Naive thymus-derived CD4-positive, alpha-beta T cell (primary cell): ENCODE measurements at regions of chr20 and their contacts with region 1.

Region 1: DNA sequence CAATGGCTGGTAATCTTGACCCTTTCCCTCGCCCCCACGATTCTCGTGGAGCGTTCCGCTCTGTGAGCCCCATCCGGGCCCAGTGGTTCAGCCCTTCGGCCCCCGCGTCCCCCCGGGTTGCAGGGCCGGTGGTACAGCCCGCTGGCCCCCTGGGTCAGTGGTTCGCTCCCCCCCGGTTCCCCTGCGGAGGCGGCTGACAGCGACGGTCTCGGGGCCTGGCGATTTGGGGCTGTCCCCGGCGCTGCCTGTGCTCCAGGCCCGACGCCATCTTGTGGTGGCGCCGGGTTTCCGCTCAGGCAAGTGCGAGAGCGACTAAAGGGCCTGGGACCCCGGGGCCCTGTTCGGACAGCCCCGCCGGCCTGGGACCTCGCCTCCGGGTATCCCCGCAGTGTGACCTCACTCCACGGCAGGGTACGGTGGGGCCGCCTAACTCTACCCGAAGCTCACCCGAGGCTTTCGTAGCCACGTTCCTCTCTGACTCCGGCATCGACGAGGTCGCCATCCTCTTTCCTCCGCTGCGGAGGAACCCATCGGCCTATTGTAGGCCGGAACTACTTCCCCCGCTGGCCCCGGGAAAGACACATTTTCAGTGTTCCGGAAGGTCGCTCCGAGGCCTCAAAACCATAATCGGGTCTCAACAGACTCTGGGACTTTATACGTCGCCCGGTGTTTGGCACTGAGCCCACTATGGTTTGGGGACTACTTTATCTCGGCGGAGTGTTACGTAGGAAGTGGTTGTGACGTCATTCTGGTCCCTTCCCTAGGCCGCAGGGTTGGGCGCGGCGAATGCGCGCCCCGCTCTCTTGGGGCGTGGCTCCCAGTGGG is at the start of gene ZNF335:
- DNase-seq: peak; percentile 89 to 99 (median 96)
- ATAC-seq: peak; percentile 89
- H3K4me3 ChIP-seq: peak within 1 kb of the TSS; percentile 74
- H3K4me3 Mint-ChIP-seq: peak within 1 kb of the TSS; percentile 80 to 100 (median 92)
- H3K27ac ChIP-seq: peak within 1 kb of the TSS; percentile 98
- H3K27ac Mint-ChIP-seq: peak within 1 kb of the TSS; percentile 99 to 100 (median 100)
- H3K4me1 ChIP-seq: peaks cover 24 to 26% of the 10 kb centered on the region in 2 donors
- H3K4me1 Mint-ChIP-seq: peaks cover 17 to 27% (median 24%) of the 10 kb centered on the region in 7 donors
- H3K27me3 ChIP-seq: no peaks in the 10 kb centered on the region
- H3K27me3 Mint-ChIP-seq: peaks cover 0 to 14% (median 0%) of the 10 kb centered on the region in 5 donors
- total RNA-seq, gene ZNF335: 39.9 to 95.2 (median 53.8) TPM

Region 2: DNA sequence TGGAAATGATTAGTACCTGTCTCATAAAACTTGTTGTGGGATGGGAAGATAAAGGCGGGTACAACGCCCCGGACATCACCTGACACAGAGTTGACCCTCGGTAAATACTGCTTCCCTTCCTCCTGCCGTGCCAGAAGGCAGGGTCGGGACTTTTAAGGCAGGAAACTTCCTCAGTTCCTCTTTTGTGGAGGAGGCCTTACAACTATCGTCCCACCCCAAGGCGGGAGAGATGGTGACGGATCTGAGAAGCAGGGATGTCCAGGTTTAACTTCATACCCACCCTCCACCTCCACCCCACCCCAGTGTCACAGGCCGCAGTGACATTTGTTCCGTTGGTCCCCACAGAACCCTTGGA is 179.6 kb before region 1 on chr20:
- CTCF ChIA-PET with region 1: no interaction called
- POLR2A ChIA-PET with region 1: interaction called, 4 read pairs
- intact Hi-C with region 1: loop called (anchors 2 to 5 kb)
- DNase-seq: peak in 1 of 9 donors; percentile 9
- ATAC-seq: peak; percentile 39
- H3K4me3 ChIP-seq: peak overlapping the region; percentile 70
- H3K4me3 Mint-ChIP-seq: peak overlapping the region; percentile 85 to 99 (median 92)
- H3K27ac ChIP-seq: peak overlapping the region; percentile 96
- H3K27ac Mint-ChIP-seq: peak overlapping the region; percentile 87 to 99 (median 93)
- H3K4me1 ChIP-seq: peaks cover 5 to 10% of the 10 kb centered on the region in 2 donors
- H3K4me1 Mint-ChIP-seq: peaks cover 13 to 28% (median 20%) of the 10 kb centered on the region in 7 donors
- H3K27me3 ChIP-seq: no peaks in the 10 kb centered on the region
- H3K27me3 Mint-ChIP-seq: peaks cover 0 to 5% (median 0%) of the 10 kb centered on the region in 5 donors

Region 3: DNA sequence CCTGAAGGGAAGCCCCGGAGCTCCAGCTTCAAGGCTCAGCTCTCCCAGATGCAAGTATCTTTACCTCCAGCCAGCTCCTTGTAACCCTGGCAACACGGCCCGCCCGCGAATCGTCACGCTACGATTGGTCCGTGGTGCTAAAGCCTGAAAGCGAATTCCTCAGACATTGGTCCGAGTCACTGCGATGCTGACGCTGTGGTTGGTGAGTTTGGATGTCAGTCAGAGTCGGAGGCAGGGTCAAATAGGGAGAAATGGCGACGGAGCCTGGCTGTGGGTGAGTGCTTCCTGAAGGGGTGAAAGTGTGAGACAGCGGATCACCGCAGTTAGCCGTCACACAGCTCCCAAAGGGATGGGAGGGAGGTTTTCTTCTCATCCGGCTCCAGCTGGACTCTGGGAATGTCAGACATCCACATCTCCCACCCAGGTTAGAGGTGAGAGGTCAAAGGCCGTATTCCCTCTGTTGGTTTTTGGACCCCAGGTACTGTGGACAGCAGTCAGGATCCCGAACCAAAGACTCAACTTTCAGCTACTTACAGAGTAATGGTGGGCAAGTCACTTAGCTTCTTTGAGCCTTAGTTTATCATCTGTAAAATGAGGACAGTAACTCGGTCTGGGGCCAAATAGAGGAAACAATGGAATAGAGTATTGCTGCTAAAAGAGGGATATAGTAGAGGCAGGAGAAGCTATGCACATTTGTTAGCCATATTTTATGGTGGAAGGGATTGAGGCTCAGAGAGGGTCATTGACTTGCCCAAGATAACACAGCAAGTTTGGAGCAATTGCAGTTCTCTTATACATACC is 90.7 kb before region 1 on chr20 and contains the start of gene ZSWIM1:
- CTCF ChIA-PET with region 1: interaction called, 6 read pairs
- POLR2A ChIA-PET with region 1: interaction called, 13 read pairs
- intact Hi-C with region 1: loop called in 1 of 2 experiments (anchors 1 kb)
- DNase-seq: peak; percentile 88 to 99 (median 98)
- ATAC-seq: peak; percentile 99
- H3K4me3 ChIP-seq: peak within 1 kb of the TSS; percentile 75
- H3K4me3 Mint-ChIP-seq: peak within 1 kb of the TSS; percentile 83 to 95 (median 92)
- H3K27ac ChIP-seq: peak within 1 kb of the TSS; percentile 95
- H3K27ac Mint-ChIP-seq: peak within 1 kb of the TSS; percentile 91 to 95 (median 93)
- H3K4me1 ChIP-seq: peaks cover 9 to 18% of the 10 kb centered on the region in 2 donors
- H3K4me1 Mint-ChIP-seq: peaks cover 26 to 43% (median 38%) of the 10 kb centered on the region in 7 donors
- H3K27me3 ChIP-seq: no peaks in the 10 kb centered on the region
- H3K27me3 Mint-ChIP-seq: no peaks in the 10 kb centered on the region
- total RNA-seq, gene ZSWIM1: 8.2 to 16.0 (median 9.8) TPM

Region 4: DNA sequence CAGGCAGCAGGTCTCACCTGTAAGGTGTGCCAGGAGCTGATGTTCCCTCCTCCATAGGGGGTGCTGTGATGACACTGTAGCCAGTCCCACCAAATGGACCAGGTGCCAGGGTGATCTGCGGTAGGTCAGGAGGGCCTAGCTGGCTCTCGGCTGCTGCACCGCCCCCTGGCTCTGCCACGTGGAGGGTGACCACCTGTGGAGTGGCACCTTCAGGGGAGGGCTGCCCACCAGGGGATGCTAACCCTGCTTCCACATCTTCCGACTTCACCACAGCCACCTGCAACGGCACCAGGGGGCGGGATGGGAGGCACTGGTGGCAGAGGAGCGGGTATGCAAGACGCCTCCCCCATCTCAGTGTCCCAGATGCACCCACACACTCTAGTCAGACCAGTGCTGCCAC is 18.2 kb before region 1 on chr20:
- CTCF ChIA-PET with region 1: interaction called, 8 read pairs
- POLR2A ChIA-PET with region 1: interaction called, 10 read pairs
- intact Hi-C with region 1: no loop called
- DNase-seq: no peak
- ATAC-seq: no peak
- H3K4me3 ChIP-seq: no peak overlapping the region
- H3K4me3 Mint-ChIP-seq: no peak overlapping the region
- H3K27ac ChIP-seq: no peak overlapping the region
- H3K27ac Mint-ChIP-seq: peak overlapping the region in 4 of 9 donors; percentile 23 to 63 (median 58)
- H3K4me1 ChIP-seq: no peaks in the 10 kb centered on the region
- H3K4me1 Mint-ChIP-seq: peaks cover 0 to 5% (median 0%) of the 10 kb centered on the region in 7 donors
- H3K27me3 ChIP-seq: no peaks in the 10 kb centered on the region
- H3K27me3 Mint-ChIP-seq: no peaks in the 10 kb centered on the region

Region 5: DNA sequence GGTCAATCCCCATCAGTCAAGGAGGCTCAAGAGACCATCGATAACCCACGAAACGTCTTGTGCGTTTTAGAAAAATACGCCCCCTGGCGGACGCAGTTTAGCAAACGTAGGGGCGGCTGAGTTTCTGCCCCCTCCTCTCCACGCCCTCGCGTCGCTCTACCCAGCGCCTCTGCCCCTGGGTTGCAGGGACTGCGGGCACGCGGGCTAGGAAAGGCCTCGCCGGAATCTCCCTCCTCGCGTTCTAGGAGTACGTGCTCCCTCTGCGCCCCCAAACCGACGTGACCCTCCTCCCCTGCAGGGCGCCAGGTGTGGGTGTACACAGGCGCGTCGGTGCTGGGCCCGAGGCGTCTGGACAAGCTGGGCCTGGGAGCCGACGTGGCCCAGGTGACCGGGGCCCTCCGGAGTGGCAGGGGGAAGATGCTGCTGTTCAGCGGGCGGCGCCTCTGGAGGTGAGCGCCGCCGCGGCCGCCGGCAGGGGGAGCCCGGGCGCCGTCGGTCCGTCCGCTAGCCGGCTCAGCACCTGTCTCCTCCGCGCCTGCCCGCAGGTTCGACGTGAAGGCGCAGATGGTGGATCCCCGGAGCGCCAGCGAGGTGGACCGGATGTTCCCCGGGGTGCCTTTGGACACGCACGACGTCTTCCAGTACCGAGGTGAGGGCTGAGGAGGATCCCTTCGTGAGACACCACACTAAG is 42.1 kb after region 1 on chr20:
- CTCF ChIA-PET with region 1: interaction called, 4 read pairs
- POLR2A ChIA-PET with region 1: interaction called, 5 read pairs
- intact Hi-C with region 1: loop called (anchors 2 to 5 kb)
- DNase-seq: peak; percentile 39 to 73 (median 60)
- ATAC-seq: peak; percentile 76
- H3K4me3 ChIP-seq: peak overlapping the region; percentile 32
- H3K4me3 Mint-ChIP-seq: peak overlapping the region; percentile 23 to 76 (median 58)
- H3K27ac ChIP-seq: no peak overlapping the region
- H3K27ac Mint-ChIP-seq: peak overlapping the region in 3 of 9 donors; percentile 1 to 43 (median 29)
- H3K4me1 ChIP-seq: peaks cover 24 to 27% of the 10 kb centered on the region in 2 donors
- H3K4me1 Mint-ChIP-seq: peaks cover 38 to 61% (median 48%) of the 10 kb centered on the region in 7 donors
- H3K27me3 ChIP-seq: peaks cover 15 to 16% of the 10 kb centered on the region in 2 donors
- H3K27me3 Mint-ChIP-seq: peaks cover 52 to 68% (median 55%) of the 10 kb centered on the region in 5 donors

Region 6: GRCh38 chr20:46132705-46133120 is 160.8 kb after region 1 on chr20:
- CTCF ChIA-PET with region 1: no interaction called
- POLR2A ChIA-PET with region 1: no interaction called
- intact Hi-C with region 1: no loop called
- DNase-seq: peak in 7 of 9 donors; percentile 37 to 60 (median 47)
- ATAC-seq: peak; percentile 83
- H3K4me3 ChIP-seq: no peak overlapping the region
- H3K4me3 Mint-ChIP-seq: no peak overlapping the region
- H3K27ac ChIP-seq: no peak overlapping the region
- H3K27ac Mint-ChIP-seq: no peak overlapping the region
- H3K4me1 ChIP-seq: no peaks in the 10 kb centered on the region
- H3K4me1 Mint-ChIP-seq: peaks cover 0 to 6% (median 0%) of the 10 kb centered on the region in 7 donors
- H3K27me3 ChIP-seq: no peaks in the 10 kb centered on the region
- H3K27me3 Mint-ChIP-seq: peaks cover 27 to 47% (median 31%) of the 10 kb centered on the region in 5 donors

Region 7: DNA sequence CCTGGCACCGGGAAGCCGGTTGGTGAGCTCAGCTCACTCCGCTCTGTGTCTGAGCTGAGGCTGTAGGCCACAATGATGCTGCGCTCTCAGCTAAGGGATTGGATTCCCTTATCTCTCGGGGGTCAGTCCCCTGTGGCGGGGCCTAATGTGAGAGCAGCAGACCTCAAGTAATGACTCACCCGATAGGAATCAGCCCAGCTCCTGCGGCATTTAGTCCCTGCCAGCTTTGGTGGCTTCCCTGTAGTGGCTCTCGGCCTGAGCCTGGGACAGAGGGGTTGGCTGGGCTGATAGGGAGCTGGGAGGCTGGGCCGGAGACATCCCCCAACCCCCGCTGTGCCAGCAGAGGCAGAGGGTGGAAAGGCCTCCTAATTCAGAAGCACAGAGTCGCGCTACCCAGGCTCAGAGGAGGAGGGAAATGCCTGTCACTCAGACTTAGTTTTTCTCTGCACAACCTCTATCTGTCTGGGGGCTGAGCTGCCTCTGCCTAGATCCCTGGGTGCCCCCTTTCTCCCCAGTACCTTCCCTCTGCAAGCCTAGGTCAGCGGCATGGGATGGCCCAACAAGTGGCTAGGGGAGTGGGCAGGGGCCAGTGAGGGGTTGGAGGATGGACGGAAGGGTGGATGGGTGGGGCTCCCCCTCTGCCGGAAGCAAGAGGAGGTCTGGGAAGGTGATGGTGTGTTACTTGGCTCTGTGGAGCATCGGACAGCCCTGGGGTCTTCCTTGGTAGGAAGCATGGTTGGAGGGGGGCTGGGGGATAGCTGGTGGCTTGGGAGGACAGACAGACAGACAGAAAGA is 244.2 kb after region 1 on chr20:
- CTCF ChIA-PET with region 1: no interaction called
- POLR2A ChIA-PET with region 1: no interaction called
- intact Hi-C with region 1: no loop called
- DNase-seq: no peak
- ATAC-seq: no peak
- H3K4me3 ChIP-seq: no peak overlapping the region
- H3K4me3 Mint-ChIP-seq: no peak overlapping the region
- H3K27ac ChIP-seq: no peak overlapping the region
- H3K27ac Mint-ChIP-seq: no peak overlapping the region
- H3K4me1 ChIP-seq: no peaks in the 10 kb centered on the region
- H3K4me1 Mint-ChIP-seq: peaks cover 0 to 4% (median 0%) of the 10 kb centered on the region in 7 donors
- H3K27me3 ChIP-seq: no peaks in the 10 kb centered on the region
- H3K27me3 Mint-ChIP-seq: peaks cover 5 to 26% (median 17%) of the 10 kb centered on the region in 5 donors

Region 8: GRCh38 chr20:46406199-46406985 is 434.5 kb after region 1 on chr20 and contains the start of gene ELMO2:
- CTCF ChIA-PET with region 1: no interaction called
- POLR2A ChIA-PET with region 1: no interaction called
- intact Hi-C with region 1: loop called (anchors 1 kb)
- DNase-seq: peak; percentile 81 to 97 (median 94)
- ATAC-seq: peak; percentile 95
- H3K4me3 ChIP-seq: peak within 1 kb of the TSS; percentile 86
- H3K4me3 Mint-ChIP-seq: peak within 1 kb of the TSS; percentile 88 to 97 (median 95)
- H3K27ac ChIP-seq: peak within 1 kb of the TSS; percentile 97
- H3K27ac Mint-ChIP-seq: peak within 1 kb of the TSS; percentile 88 to 97 (median 93)
- H3K4me1 ChIP-seq: peaks cover 38 to 50% of the 10 kb centered on the region in 2 donors
- H3K4me1 Mint-ChIP-seq: peaks cover 44 to 78% (median 70%) of the 10 kb centered on the region in 7 donors
- H3K27me3 ChIP-seq: no peaks in the 10 kb centered on the region
- H3K27me3 Mint-ChIP-seq: peaks cover 0 to 3% (median 0%) of the 10 kb centered on the region in 5 donors
- total RNA-seq, gene ELMO2: 50.8 to 104 (median 52.3) TPM